ENCODE measurements at regions of chr2 and their contacts with region 1.

Region 1: GRCh38 chr2:75064691-75065396 is 106.4 kb downstream of the POLE4 start:
- DNase-seq: peak; percentile 8
- H3K4me3 Mint-ChIP-seq: no peak overlapping the region
- H3K27ac Mint-ChIP-seq: no peak overlapping the region
- H3K4me1 Mint-ChIP-seq: no peaks in the 10 kb centered on the region
- H3K27me3 Mint-ChIP-seq: peaks cover 2% of the 10 kb centered on the region

Region 2: GRCh38 chr2:74715078-74715791 is 349.6 kb before region 1 on chr2:
- intact Hi-C with region 1: loop called (anchors 1 kb)
- DNase-seq: peak; percentile 75
- H3K4me3 Mint-ChIP-seq: peak overlapping the region; percentile 83
- H3K27ac Mint-ChIP-seq: no peak overlapping the region
- H3K4me1 Mint-ChIP-seq: peaks cover 9% of the 10 kb centered on the region
- H3K27me3 Mint-ChIP-seq: peaks cover 12% of the 10 kb centered on the region

Region 3: GRCh38 chr2:75403991-75404428 is 339.2 kb after region 1 on chr2:
- intact Hi-C with region 1: loop called (anchors 1 kb)
- DNase-seq: no peak
- H3K4me3 Mint-ChIP-seq: no peak overlapping the region
- H3K27ac Mint-ChIP-seq: no peak overlapping the region
- H3K4me1 Mint-ChIP-seq: no peaks in the 10 kb centered on the region
- H3K27me3 Mint-ChIP-seq: peaks cover 6% of the 10 kb centered on the region

Region 4: DNA sequence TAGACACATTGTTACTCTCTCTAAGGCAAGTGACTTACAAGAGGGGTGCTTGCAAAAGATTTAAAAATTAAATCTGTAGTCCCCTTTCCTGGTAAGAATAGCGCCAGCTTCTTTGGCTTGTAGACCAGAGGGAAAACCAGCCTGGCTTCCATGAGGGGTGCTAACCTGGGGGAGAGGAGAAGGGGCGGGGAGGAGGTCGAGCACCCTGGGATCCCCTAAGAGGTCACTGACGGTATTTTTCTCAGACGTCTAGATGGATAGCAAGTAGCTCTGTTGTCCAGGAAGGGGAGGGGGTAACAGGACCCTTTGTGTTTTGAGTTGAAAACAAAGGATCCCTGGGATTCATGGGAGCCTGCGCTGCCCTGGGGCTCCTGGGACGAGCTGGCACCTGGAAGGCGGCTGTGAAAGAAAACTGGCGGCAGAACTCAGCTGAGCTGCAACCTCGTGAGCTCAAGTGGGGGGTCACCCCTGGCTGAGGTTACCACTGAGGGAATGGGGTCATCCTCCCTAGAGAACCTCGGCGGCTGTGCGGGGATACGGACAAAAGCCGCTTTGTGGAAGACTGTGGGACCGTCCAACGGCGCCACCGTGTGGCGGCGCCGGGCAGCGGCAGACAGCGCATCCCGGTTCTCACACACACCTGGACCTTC is 544.0 kb after region 1 on chr2:
- intact Hi-C with region 1: loop called (anchors 5 kb)
- DNase-seq: peak; percentile 27
- H3K4me3 Mint-ChIP-seq: no peak overlapping the region
- H3K27ac Mint-ChIP-seq: no peak overlapping the region
- H3K4me1 Mint-ChIP-seq: no peaks in the 10 kb centered on the region
- H3K27me3 Mint-ChIP-seq: peaks cover 14% of the 10 kb centered on the region